ENCODE measurements at regions of chr7 and their contacts with region 1.

Region 1: GRCh38 chr7:23273141-23273599 is 26.0 kb upstream of the MALSU1 start:
- DNase-seq: peak; percentile 98
- ATAC-seq: peak; percentile 97
- H3K4me3 Mint-ChIP-seq: peak overlapping the region; percentile 59
- H3K27ac Mint-ChIP-seq: peak overlapping the region; percentile 47
- H3K4me1 Mint-ChIP-seq: peaks cover 12% of the 10 kb centered on the region
- H3K27me3 Mint-ChIP-seq: peaks cover 12% of the 10 kb centered on the region
- CTCF ChIP-seq: peak; percentile 75

Region 2: DNA sequence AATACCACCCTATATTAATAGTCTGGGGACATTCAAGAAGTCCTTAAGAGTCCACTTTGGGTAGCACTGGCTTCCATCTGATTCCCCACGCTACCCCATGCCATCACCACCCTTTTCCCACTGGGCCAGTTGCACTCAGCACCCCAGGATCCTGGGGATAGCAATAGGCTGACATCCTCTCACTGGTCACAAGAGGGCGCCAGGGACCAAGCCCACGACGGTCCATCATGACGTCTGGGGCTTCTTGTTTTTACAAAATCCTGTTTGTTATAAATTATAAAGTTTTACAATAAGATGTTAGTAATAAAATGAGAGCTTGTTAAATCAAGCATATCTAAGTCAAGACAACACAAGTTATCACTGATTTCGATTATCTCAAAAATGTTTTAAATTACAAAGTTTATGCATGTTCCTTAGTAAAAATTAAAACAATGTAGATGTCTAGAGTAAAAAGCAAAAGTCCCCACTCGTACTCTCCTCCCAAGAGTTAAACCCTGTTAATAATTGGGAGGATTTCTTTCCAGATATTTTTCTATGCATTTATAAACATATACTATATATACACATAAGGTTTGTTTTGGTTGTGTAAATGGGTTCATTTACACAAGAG is 11.2 kb before region 1 on chr7:
- CTCF ChIA-PET with region 1: interaction called, 139 read pairs
- POLR2A ChIA-PET with region 1: no interaction called
- intact Hi-C with region 1: no loop called
- DNase-seq: peak; percentile 73
- ATAC-seq: peak; percentile 98
- H3K4me3 Mint-ChIP-seq: no peak overlapping the region
- H3K27ac Mint-ChIP-seq: no peak overlapping the region
- H3K4me1 Mint-ChIP-seq: peaks cover 3% of the 10 kb centered on the region
- H3K27me3 Mint-ChIP-seq: peaks cover 1% of the 10 kb centered on the region
- CTCF ChIP-seq: peak; percentile 84

Region 3: DNA sequence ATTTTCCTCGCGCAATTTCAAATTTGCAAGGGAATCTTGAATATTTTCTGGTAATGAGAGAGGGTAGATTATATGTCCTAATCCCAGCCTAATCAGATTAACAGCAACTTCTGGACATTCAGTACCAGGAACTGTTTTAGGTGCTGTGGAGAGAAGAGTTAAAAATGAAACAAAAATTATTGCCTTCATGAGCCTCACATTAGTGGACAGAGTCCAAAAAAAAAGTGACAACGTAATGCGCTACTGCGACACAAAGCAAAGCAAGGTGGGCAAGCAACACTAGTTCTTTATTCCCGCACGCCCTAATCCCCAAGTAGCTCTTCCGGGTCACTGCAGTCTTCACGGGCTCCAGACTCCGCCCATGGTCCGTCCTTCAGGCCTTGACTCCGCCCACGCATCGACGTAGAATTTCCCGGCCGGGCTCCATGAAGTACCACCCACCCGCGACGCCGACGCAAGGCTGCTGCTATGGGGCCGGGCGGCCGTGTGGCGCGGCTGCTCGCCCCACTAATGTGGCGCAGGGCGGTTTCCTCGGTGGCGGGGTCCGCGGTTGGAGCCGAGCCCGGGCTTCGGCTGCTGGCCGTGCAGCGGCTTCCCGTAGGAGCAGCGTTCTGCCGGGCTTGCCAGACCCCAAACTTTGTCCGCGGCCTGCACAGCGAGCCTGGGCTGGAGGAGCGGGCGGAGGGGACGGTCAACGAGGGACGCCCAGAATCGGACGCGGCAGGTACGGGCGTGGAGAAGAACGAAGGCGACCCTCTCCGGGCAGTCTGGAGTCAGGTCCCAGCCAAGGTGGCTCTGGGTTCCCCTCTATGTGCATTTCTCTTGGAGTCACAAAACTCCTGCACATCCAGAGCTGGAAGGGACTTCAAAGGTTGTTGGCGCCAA is 26.0 kb after region 1 on chr7 and contains the start of gene MALSU1:
- CTCF ChIA-PET with region 1: interaction called, 31 read pairs
- POLR2A ChIA-PET with region 1: no interaction called
- intact Hi-C with region 1: no loop called
- DNase-seq: peak; percentile 100
- ATAC-seq: peak; percentile 100
- H3K4me3 Mint-ChIP-seq: peak within 1 kb of the TSS; percentile 97
- H3K27ac Mint-ChIP-seq: peak within 1 kb of the TSS; percentile 86
- H3K4me1 Mint-ChIP-seq: peaks cover 34% of the 10 kb centered on the region
- H3K27me3 Mint-ChIP-seq: no peaks in the 10 kb centered on the region
- CTCF ChIP-seq: no peak
- total RNA-seq, gene MALSU1: 99.1 to 101 TPM

Region 4: GRCh38 chr7:23357190-23358093 is 84.3 kb after region 1 on chr7:
- CTCF ChIA-PET with region 1: interaction called, 55 read pairs
- POLR2A ChIA-PET with region 1: interaction called, 3 read pairs
- intact Hi-C with region 1: loop called (anchors 2 kb)
- DNase-seq: no peak
- ATAC-seq: peak; percentile 52
- H3K4me3 Mint-ChIP-seq: no peak overlapping the region
- H3K27ac Mint-ChIP-seq: no peak overlapping the region
- H3K4me1 Mint-ChIP-seq: peaks cover 18% of the 10 kb centered on the region
- H3K27me3 Mint-ChIP-seq: peaks cover 12% of the 10 kb centered on the region
- CTCF ChIP-seq: peak; percentile 75

Region 5: DNA sequence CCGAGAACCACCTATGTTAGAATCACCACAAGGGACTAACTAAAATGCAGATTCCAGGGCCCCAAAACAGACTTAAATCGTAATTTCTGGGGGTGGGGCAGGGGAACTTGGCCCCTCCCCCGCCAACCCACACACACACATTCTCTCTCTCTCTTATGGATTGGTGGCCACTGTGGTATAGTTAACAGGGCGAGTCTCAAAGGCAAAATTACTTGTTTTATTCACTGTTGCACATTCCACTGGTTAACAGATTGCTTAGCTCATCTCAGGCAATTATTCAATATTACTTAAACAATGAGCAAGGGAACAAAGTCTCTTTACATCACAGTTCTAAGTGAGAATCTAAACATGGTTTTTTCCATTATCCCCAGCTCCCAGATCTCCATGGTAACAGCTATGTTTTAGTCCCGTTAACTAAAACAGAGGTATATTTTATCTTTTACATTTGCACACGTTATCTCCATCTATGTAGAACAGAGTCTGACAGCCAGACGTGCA is 158.6 kb after region 1 on chr7:
- CTCF ChIA-PET with region 1: interaction called, 12 read pairs
- POLR2A ChIA-PET with region 1: no interaction called
- intact Hi-C with region 1: no loop called
- DNase-seq: no peak
- ATAC-seq: no peak
- H3K4me3 Mint-ChIP-seq: no peak overlapping the region
- H3K27ac Mint-ChIP-seq: no peak overlapping the region
- H3K4me1 Mint-ChIP-seq: peaks cover 8% of the 10 kb centered on the region
- H3K27me3 Mint-ChIP-seq: peaks cover 18% of the 10 kb centered on the region
- CTCF ChIP-seq: no peak

Region 6: DNA sequence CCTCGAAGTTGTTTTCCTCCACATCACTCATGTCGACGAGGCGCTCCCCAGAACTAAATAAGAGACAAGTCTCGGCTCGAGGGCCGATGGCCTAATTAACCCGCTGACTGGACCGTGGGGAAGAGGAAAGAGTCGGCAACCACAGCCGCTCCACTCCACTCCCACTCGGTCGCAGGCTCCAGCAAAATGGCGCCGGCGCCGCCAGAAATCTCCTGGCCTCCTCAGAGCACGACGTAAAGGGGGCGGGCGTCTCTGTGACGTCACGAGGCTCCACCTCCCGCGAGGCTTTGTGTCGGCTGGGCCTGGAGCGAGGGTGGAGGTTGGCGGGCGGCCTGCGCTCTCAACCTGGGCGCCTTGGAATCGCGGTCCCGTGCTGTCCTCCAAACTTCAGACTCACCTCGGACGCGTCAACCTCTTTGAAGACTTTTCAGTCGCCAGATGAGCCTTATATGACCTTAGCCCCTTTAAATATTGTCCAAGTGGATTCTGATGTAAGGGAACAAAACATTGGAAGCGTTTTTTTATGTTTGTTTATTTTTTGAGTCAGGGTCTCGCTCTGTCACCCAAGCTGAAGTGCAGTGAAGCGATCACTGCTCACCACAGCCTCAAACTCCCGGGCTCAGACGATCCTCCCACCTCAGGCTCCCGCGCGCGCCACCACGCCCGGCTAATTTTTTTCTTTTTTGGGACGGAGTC is 258.8 kb after region 1 on chr7 and contains the start of gene TRA2A:
- CTCF ChIA-PET with region 1: interaction called, 11 read pairs
- POLR2A ChIA-PET with region 1: interaction called, 3 read pairs
- intact Hi-C with region 1: loop called (anchors 5 kb)
- DNase-seq: peak; percentile 99
- ATAC-seq: peak; percentile 89
- H3K4me3 Mint-ChIP-seq: peak within 1 kb of the TSS; percentile 93
- H3K27ac Mint-ChIP-seq: peak within 1 kb of the TSS; percentile 100
- H3K4me1 Mint-ChIP-seq: peaks cover 39% of the 10 kb centered on the region
- H3K27me3 Mint-ChIP-seq: no peaks in the 10 kb centered on the region
- CTCF ChIP-seq: no peak
- total RNA-seq, gene TRA2A: 86.3 to 86.5 TPM

Measured in activated CD8-positive, alpha-beta T cell treated with anti-CD3 and anti-CD28 coated beads for 36 hours (primary cell).